CD4-positive, alpha-beta memory T cell (primary cell): ENCODE measurements at regions of chr9 and their contacts with region 1.

Region 1: DNA sequence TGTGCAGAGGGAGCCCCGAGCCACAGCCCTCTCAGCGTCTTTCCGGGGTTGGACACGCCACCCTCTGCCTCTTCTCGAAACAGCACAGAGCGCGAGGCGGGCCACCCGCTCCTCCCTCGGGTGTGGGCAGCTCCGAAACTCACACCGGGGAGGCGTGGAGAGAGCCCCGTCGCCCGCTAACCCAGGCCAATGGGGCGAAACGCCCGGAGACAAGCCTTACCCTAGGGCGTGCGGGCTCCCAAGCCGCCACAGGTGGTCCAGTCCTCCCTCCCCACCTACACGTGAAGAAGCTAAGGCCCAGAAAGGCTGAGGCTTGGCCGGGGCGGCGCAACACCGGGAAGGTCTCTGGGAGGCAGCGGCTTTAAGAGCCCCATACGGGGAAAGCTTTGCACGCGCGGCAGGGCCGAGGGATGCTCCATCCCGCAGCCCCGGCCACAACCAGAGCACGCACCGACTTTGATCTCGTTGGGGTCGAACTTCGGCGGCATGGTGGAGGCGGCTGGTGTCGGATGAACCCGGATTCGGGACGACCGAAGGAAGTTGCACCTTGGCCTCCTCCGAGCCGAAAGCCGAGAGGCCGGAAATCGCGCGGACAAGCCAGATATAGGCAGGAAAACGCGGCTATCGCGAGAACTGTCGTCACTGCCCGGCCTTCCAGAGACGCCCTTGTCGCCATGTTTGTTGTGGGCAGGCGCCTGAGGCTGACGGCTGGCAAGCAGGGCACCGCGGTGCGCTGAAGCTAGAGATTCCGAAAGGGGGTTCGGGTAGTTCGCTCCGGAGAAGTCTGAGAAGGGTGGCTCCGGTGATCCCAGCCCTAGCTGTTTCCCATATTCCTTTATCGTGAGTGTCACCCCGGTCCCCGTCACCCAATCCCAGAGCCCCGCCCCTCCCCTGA is at the starts of genes LRSAM1 and RPL12:
- DNase-seq: peak; percentile 96 to 99 (median 97)
- H3K4me3 ChIP-seq: peak within 1 kb of the TSS; percentile 86 to 97
- H3K4me3 Mint-ChIP-seq: peak within 1 kb of the TSS; percentile 95 to 99 (median 96)
- H3K27ac ChIP-seq: peak within 1 kb of the TSS; percentile 83
- H3K27ac Mint-ChIP-seq: peak within 1 kb of the TSS; percentile 95 to 98 (median 96)
- H3K4me1 ChIP-seq: peaks cover 29% of the 10 kb centered on the region
- H3K4me1 Mint-ChIP-seq: peaks cover 27 to 62% (median 36%) of the 10 kb centered on the region in 4 donors
- H3K27me3 ChIP-seq: no peaks in the 10 kb centered on the region
- H3K27me3 Mint-ChIP-seq: no peaks in the 10 kb centered on the region
- total RNA-seq, gene LRSAM1: 30.5 to 31.3 TPM
- total RNA-seq, gene RPL12: 1,622 to 1,664 TPM

Region 2: GRCh38 chr9:127159325-127159801 is 291.7 kb before region 1 on chr9:
- CTCF ChIA-PET with region 1: no interaction called
- POLR2A ChIA-PET with region 1: no interaction called
- intact Hi-C with region 1: no loop called
- DNase-seq: no peak
- H3K4me3 ChIP-seq: no peak overlapping the region
- H3K4me3 Mint-ChIP-seq: no peak overlapping the region
- H3K27ac ChIP-seq: no peak overlapping the region
- H3K27ac Mint-ChIP-seq: no peak overlapping the region
- H3K4me1 ChIP-seq: peaks cover 34% of the 10 kb centered on the region
- H3K4me1 Mint-ChIP-seq: peaks cover 20 to 37% (median 30%) of the 10 kb centered on the region in 4 donors
- H3K27me3 ChIP-seq: no peaks in the 10 kb centered on the region
- H3K27me3 Mint-ChIP-seq: peaks cover 0 to 2% of the 10 kb centered on the region in 2 donors

Region 3: GRCh38 chr9:127205183-127205470 is 245.9 kb before region 1 on chr9:
- CTCF ChIA-PET with region 1: no interaction called
- POLR2A ChIA-PET with region 1: no interaction called
- intact Hi-C with region 1: no loop called
- DNase-seq: no peak
- H3K4me3 ChIP-seq: no peak overlapping the region
- H3K4me3 Mint-ChIP-seq: no peak overlapping the region
- H3K27ac ChIP-seq: no peak overlapping the region
- H3K27ac Mint-ChIP-seq: peak overlapping the region in 1 of 7 donors; percentile 83
- H3K4me1 ChIP-seq: no peaks in the 10 kb centered on the region
- H3K4me1 Mint-ChIP-seq: peaks cover 0 to 5% (median 0%) of the 10 kb centered on the region in 4 donors
- H3K27me3 ChIP-seq: no peaks in the 10 kb centered on the region
- H3K27me3 Mint-ChIP-seq: no peaks in the 10 kb centered on the region

Region 4: DNA sequence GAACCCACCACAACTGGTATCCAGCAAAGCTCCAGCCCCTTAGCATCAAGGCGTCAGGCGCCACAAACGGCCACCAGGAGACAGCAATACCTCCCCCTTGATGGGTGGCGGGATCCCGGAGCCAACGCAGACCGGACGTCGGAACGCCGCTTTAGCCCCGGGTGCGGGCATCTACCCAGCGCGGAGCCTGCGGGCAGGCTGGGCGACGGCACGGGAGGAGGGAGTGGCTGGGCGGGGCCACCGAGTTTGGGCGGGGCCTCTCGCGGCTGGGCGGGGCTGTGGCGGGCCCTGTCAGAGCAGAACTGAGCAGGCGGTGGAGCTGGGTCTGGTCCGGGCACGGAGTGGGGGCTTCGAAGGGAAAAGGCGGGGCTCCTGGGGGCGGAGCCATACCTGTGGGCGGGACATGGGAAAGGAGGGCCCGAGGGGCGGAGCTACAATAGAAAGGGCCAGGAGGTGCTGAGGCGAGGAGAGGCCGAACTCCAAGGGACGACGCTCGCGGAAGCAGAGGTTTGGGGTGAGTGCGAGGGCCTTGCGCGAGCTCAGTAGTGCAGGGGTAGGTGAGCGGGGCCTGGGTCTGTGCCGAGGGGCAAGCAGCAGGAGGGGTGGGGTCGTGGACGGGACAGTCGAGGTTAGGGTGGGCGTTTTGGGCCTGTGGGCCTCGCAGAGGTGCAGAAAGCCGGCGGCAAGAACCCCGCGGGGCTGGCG is 226.7 kb before region 1 on chr9:
- CTCF ChIA-PET with region 1: interaction called, 4 read pairs
- POLR2A ChIA-PET with region 1: interaction called, 53 read pairs
- intact Hi-C with region 1: loop called (anchors 2 kb)
- DNase-seq: peak; percentile 86 to 90 (median 87)
- H3K4me3 ChIP-seq: peak overlapping the region in 1 of 2 donors; percentile 53
- H3K4me3 Mint-ChIP-seq: peak overlapping the region; percentile 77 to 90 (median 87)
- H3K27ac ChIP-seq: no peak overlapping the region
- H3K27ac Mint-ChIP-seq: peak overlapping the region; percentile 79 to 96 (median 93)
- H3K4me1 ChIP-seq: peaks cover 35% of the 10 kb centered on the region
- H3K4me1 Mint-ChIP-seq: peaks cover 23 to 48% (median 33%) of the 10 kb centered on the region in 4 donors
- H3K27me3 ChIP-seq: no peaks in the 10 kb centered on the region
- H3K27me3 Mint-ChIP-seq: peaks cover 0 to 6% of the 10 kb centered on the region in 2 donors

Region 5: DNA sequence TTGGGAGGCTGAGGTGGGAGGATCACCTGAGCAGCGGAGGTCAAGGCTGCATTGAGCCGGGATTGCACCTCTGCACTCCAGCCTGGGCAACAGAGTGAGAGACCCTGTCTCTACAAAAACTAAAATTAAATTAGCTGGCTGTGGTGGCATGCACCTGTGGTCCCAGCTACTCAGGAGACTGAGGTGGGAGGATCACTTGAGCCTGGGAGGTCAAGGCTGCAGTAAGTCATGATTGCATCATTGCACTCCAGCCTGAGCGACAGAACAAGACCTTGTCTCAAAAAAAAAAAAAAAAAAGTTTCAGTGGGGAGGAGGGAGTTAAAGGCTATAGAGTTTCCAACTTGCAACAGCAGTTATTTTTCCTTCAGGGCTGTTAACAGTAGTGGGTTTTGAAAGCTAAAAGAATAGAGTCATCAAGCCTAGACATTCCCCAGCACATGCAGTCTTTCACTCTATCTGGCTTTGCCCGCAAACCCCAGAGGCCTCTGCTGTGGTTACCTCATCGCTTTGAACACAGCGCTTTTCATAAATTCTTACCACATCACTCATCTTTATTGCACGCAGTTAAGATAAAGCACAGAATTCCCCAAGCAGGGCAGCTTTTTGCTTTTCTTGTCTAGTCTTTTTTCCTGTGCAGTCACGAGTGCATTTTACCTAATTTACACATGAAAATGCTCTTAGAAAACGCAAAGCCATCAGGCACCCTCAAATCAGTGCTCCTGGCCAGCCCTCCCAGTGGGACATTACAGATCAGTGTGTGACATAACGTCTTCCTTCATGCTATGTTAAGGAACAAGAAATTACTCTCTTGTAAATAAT is 62.8 kb before region 1 on chr9:
- CTCF ChIA-PET with region 1: no interaction called
- POLR2A ChIA-PET with region 1: interaction called, 30 read pairs
- intact Hi-C with region 1: loop called (anchors 2 kb)
- DNase-seq: peak; percentile 90 to 95 (median 93)
- H3K4me3 ChIP-seq: no peak overlapping the region
- H3K4me3 Mint-ChIP-seq: peak overlapping the region in 6 of 8 donors; percentile 40 to 69 (median 54)
- H3K27ac ChIP-seq: no peak overlapping the region
- H3K27ac Mint-ChIP-seq: peak overlapping the region; percentile 39 to 93 (median 82)
- H3K4me1 ChIP-seq: peaks cover 23% of the 10 kb centered on the region
- H3K4me1 Mint-ChIP-seq: peaks cover 17 to 18% (median 18%) of the 10 kb centered on the region in 4 donors
- H3K27me3 ChIP-seq: peaks cover 66% of the 10 kb centered on the region
- H3K27me3 Mint-ChIP-seq: peaks cover 56 to 65% of the 10 kb centered on the region in 2 donors

Region 6: GRCh38 chr9:127418037-127418471 is 33.0 kb before region 1 on chr9:
- CTCF ChIA-PET with region 1: no interaction called
- POLR2A ChIA-PET with region 1: interaction called, 67 read pairs
- intact Hi-C with region 1: no loop called
- DNase-seq: peak in 2 of 5 donors; percentile 39
- H3K4me3 ChIP-seq: no peak overlapping the region
- H3K4me3 Mint-ChIP-seq: peak overlapping the region in 2 of 8 donors; percentile 25 to 59
- H3K27ac ChIP-seq: no peak overlapping the region
- H3K27ac Mint-ChIP-seq: no peak overlapping the region
- H3K4me1 ChIP-seq: peaks cover 13% of the 10 kb centered on the region
- H3K4me1 Mint-ChIP-seq: peaks cover 5 to 10% (median 7%) of the 10 kb centered on the region in 4 donors
- H3K27me3 ChIP-seq: no peaks in the 10 kb centered on the region
- H3K27me3 Mint-ChIP-seq: peaks cover 13 to 23% of the 10 kb centered on the region in 2 donors

Region 7: GRCh38 chr9:127437497-127438264 is 13.4 kb before region 1 on chr9:
- CTCF ChIA-PET with region 1: interaction called, 6 read pairs
- POLR2A ChIA-PET with region 1: interaction called, 24 read pairs
- intact Hi-C with region 1: no loop called
- DNase-seq: peak; percentile 37 to 57 (median 51)
- H3K4me3 ChIP-seq: no peak overlapping the region
- H3K4me3 Mint-ChIP-seq: peak overlapping the region; percentile 3 to 74 (median 44)
- H3K27ac ChIP-seq: no peak overlapping the region
- H3K27ac Mint-ChIP-seq: peak overlapping the region; percentile 77 to 92 (median 84)
- H3K4me1 ChIP-seq: peaks cover 15% of the 10 kb centered on the region
- H3K4me1 Mint-ChIP-seq: peaks cover 14 to 21% (median 19%) of the 10 kb centered on the region in 4 donors
- H3K27me3 ChIP-seq: no peaks in the 10 kb centered on the region
- H3K27me3 Mint-ChIP-seq: no peaks in the 10 kb centered on the region

Region 8: DNA sequence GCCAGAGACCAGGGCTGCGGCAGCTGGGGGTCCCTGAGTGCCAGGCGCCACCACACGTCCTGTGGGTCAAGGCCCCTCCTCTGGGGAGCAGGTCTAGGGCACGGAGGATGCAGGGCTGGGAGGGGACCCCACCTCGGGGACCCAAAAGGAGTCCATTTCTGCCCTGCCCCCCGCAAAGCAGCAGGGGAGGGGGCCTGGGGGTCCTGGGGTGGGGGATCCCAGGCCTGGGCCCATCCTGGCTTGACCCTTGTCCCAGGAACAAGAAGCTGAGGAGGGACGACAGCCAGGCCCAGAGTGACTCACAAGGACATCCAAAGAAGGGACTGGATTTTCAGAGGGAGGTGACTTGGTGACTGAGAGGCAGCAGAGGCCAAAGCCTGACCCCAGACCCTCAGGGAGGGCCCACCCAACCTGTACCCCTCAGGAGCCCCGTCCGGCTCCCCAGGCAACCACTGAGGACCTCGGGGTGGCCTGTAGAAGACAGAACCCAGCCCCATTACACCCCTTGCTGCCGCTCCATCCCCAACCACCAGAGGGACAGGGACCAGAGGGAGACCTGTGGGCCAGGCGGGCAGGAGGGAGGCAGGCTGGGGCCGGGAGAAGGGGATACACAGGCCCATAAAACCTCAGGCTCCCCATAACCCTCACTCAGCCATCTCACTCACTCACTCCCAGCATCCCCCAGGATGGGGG is 54.5 kb after region 1 on chr9:
- CTCF ChIA-PET with region 1: no interaction called
- POLR2A ChIA-PET with region 1: no interaction called
- intact Hi-C with region 1: no loop called
- DNase-seq: peak in 2 of 5 donors; percentile 11 to 13
- H3K4me3 ChIP-seq: no peak overlapping the region
- H3K4me3 Mint-ChIP-seq: no peak overlapping the region
- H3K27ac ChIP-seq: no peak overlapping the region
- H3K27ac Mint-ChIP-seq: no peak overlapping the region
- H3K4me1 ChIP-seq: no peaks in the 10 kb centered on the region
- H3K4me1 Mint-ChIP-seq: peaks cover 0 to 5% (median 2%) of the 10 kb centered on the region in 4 donors
- H3K27me3 ChIP-seq: no peaks in the 10 kb centered on the region
- H3K27me3 Mint-ChIP-seq: no peaks in the 10 kb centered on the region

Region 9: GRCh38 chr9:127611899-127612790 is 161.1 kb after region 1 on chr9 and contains the start of gene STXBP1:
- CTCF ChIA-PET with region 1: no interaction called
- POLR2A ChIA-PET with region 1: interaction called, 12 read pairs
- intact Hi-C with region 1: no loop called
- DNase-seq: peak; percentile 81 to 88 (median 85)
- H3K4me3 ChIP-seq: peak within 1 kb of the TSS; percentile 54 to 74
- H3K4me3 Mint-ChIP-seq: peak within 1 kb of the TSS; percentile 88 to 98 (median 96)
- H3K27ac ChIP-seq: peak within 1 kb of the TSS; percentile 24
- H3K27ac Mint-ChIP-seq: peak within 1 kb of the TSS; percentile 59 to 93 (median 87)
- H3K4me1 ChIP-seq: peaks cover 32% of the 10 kb centered on the region
- H3K4me1 Mint-ChIP-seq: peaks cover 23 to 45% (median 32%) of the 10 kb centered on the region in 4 donors
- H3K27me3 ChIP-seq: peaks cover 4% of the 10 kb centered on the region
- H3K27me3 Mint-ChIP-seq: peaks cover 5 to 14% of the 10 kb centered on the region in 2 donors
- total RNA-seq, gene STXBP1: 19.9 to 20.9 TPM